Activated CD4-positive, alpha-beta memory T cell treated with anti-CD3 and anti-CD28 coated beads, Interleukin-2, amount 10 ng/mL, durations not matched to agents 7 days and 5 days (primary cell): ENCODE measurements at regions of chr5 and their contacts with region 1.

Region 1: DNA sequence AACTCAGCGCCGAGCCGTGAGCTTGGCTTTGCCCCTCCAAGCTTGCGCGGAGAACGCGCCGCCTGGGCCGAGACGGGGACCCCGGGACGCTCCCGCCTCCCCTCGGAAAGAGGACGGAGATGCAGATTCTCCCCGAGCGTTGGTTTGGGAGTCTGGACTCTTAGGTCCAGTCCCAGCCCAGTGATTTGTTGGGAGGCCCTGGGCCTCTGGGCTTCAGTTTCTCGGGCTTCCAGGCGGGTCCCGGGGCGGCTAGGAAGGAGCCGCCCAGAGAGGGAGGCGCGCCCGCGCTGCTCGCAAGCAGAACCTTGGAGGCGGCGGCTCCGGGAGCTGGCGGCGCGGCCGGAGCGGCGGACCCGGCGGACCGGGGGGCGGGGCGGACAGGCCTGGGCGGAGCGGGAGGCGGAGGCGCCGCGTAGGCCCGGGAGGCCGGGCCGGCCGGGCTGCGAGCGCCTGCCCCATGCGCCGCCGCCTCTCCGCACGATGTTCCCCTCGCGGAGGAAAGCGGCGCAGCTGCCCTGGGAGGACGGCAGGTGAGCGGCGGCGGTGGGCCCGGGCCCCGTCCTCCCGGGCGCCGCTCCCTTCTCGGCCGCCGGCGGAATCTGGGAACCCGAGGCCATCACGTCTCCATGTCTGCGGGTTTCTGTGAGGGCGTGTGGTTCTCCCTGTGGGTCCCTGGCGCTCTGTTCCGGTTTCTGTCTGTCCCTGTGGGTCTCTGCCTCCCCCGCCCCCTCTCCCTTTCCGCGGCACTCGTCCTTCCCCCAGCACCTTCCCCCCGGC is at the start of gene B4GALT7:
- DNase-seq: peak; percentile 86
- H3K4me3 Mint-ChIP-seq: peak within 1 kb of the TSS; percentile 90
- H3K27ac Mint-ChIP-seq: peak within 1 kb of the TSS; percentile 79
- H3K4me1 Mint-ChIP-seq: peaks cover 34% of the 10 kb centered on the region
- H3K27me3 Mint-ChIP-seq: no peaks in the 10 kb centered on the region
- total RNA-seq, gene B4GALT7: 19.5 to 22.1 TPM

Region 2: DNA sequence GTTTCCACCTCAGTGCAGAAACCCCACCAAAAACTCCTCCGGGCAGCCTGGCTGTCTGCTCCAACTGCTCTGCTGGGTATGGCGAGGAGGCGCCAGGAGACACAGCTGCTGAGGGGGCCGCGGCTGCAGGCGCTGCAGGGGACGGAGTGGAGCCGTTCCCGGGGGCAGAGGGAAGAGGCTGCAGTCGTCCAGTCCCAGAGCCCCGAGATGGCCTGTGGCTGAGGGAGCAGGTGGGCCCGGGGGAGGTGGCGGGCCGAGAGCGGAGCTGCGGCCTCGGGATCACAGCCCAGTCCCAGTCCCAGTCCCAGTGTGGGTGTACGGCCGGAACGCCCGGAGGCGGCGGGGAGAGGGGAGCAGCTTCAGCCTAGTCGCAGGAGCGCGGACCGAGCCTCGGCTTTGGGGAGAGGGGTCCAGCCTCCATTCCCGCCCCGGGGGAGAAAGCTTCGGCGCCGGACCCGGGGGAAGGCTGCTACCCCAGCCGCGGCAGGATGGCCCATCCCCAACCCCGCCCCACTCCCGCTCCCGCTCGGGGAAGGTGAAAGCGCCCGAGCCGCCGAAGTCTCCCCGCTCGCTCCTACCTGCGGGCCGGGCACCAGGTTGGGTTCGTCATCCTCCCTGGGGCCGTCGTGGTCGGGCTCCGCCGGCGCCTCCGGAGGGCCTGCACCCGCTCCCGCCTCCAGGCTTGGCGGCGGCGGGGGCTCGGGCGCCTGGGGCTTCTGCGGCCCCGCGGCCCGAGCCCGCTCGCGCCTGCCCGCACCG is 46.1 kb before region 1 on chr5:
- CTCF ChIA-PET with region 1: no interaction called
- POLR2A ChIA-PET with region 1: interaction called, 10 read pairs
- DNase-seq: peak; percentile 54
- H3K4me3 Mint-ChIP-seq: peak overlapping the region; percentile 77
- H3K27ac Mint-ChIP-seq: peak overlapping the region; percentile 13
- H3K4me1 Mint-ChIP-seq: peaks cover 49% of the 10 kb centered on the region
- H3K27me3 Mint-ChIP-seq: no peaks in the 10 kb centered on the region